Cardiac septum (tissue), 1 donor: ENCODE measurements at regions of chr3 and their contacts with region 1.

Region 1: GRCh38 chr3:42652611-42653302 is 740 bp upstream of the ZBTB47 start:
- DNase-seq: peak; percentile 91

Region 2: DNA sequence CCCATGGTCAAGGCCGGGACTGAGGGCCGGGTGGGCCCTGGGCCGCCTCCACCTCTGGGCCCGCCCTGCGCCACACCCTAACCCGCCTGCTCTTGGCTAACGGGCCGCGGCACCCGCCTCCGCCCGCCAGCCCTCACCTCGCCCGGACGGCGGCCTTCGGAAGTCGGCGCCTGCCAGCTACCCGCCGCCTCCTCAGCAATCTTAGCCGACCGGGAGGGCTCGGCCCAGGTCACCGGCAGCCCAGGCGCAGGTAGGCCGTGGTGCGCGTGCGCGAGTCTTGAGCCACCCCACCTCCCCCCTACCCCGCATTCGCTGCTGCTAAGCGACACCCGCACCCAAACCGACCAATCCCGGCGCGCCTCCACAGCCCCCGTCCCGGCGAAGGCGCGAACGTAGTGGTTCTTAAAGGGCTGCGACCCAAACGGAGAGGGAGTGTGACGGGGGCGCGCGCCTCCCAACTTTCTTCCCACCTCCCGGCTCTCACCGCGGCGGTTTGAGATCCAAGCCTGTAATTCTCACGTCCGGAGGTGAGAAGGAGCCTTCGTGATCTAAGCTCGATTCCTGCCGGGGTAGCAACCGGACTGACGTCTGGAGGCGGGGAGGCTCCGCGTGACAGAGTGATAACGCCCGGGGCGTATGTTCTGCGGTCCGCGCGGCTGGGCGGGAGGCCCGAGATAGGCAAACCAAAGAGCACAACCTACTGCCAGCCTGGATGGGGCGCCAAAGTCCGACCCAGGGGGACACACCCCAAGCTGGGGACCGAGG is 70.9 kb before region 1 on chr3 and contains the start of gene SEC22C:
- intact Hi-C with region 1: loop called (anchors 2 kb)
- DNase-seq: peak; percentile 98
- total RNA-seq, gene SEC22C: 31.5 TPM

Region 3: DNA sequence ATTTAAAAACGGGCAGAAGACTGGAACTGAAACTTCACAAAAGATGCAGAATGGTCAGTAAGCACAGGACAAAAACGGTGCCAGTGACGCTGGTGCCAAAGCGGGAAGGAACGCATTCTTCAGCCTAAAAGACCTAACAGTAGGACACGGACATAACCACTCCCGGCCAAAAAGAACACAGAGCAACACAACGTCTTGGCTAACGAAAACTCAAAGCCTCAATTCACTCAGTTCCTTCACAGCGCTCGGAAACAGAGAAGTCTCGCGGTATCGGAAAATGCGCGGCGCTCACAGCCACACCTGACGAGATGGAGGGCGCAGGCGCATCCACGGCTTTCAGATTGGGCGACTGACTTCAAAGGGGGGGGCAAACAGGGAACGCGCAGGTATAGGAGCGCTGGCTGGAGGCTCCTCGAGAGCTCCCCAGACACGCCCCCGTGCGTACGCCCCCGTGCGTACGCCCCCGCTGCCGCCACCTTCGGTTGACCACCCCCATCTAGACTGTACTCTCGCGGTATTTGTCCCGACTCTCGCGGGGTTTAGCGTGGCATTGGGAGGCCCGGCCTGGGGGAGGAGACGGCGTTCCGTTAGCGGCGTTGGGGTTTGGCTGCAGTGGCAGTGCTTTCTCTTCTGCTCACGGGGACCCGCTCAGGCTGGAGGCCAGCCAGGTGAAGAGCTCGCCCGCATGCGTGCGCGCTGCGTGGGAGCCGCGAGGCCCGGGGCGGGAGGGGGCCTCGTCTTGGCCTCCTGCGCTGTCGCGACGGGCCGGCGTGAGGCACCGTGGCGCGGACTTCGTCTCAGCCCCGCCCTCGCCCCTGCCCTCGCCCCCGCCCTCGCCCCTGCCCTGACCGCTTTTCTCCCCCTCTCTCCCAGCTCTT is 52.4 kb before region 1 on chr3 and contains the start of gene NKTR:
- intact Hi-C with region 1: loop called (anchors 2 kb)
- DNase-seq: peak; percentile 98
- total RNA-seq, gene NKTR: 35.1 TPM

Region 4: GRCh38 chr3:42683875-42684598 is 31.3 kb after region 1 on chr3:
- intact Hi-C with region 1: loop called (anchors 2 kb)
- DNase-seq: peak; percentile 81

Region 5: GRCh38 chr3:42739401-42740158 is 86.8 kb after region 1 on chr3:
- intact Hi-C with region 1: loop called (anchors 1 kb)
- DNase-seq: peak; percentile 92